Pancreas (tissue), 10 donors: ENCODE measurements at regions of chr5 and their contacts with region 1.

Region 1: DNA sequence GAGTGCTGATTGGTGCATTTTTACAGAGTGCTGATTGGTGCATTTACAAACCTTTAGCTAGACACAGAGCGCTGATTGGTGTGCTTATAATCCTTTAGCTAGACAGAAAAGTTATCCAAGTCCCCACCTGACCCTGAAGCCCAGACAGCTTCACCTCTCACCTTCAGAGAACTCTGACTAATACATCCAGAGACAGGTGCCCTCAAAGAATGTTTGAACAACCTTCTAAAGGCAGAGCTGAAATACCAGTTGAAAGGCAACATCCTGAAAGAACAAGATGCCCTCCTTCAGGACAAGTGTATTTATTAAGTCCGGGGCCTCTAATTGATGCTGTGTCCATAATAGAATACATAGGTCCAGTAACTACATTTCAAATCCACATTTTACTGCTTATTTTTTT is 680.4 kb downstream of the CDH18 start:
- DNase-seq: no peak
- ATAC-seq: no peak
- H3K4me3 ChIP-seq: no peak overlapping the region
- H3K27ac ChIP-seq: no peak overlapping the region
- H3K4me1 ChIP-seq: no peaks in the 10 kb centered on the region
- H3K27me3 ChIP-seq: no peaks in the 10 kb centered on the region
- CTCF ChIP-seq: no peak

Region 2: GRCh38 chr5:18745646-18746615 is 561.6 kb before region 1 on chr5:
- intact Hi-C with region 1: no loop called
- DNase-seq: peak in 1 of 6 donors; percentile 20
- ATAC-seq: peak in 3 of 4 donors; percentile 46 to 80 (median 76)
- H3K4me3 ChIP-seq: peak overlapping the region in 2 of 4 donors; percentile 21 to 39
- H3K27ac ChIP-seq: peak overlapping the region in 2 of 4 donors; percentile 17 to 35
- H3K4me1 ChIP-seq: no peaks in the 10 kb centered on the region
- H3K27me3 ChIP-seq: no peaks in the 10 kb centered on the region
- CTCF ChIP-seq: no peak

Region 3: GRCh38 chr5:18999478-18999877 is 308.1 kb before region 1 on chr5:
- intact Hi-C with region 1: loop called in 1 of 3 experiments (anchors 5 kb)
- DNase-seq: no peak
- ATAC-seq: no peak
- H3K4me3 ChIP-seq: no peak overlapping the region
- H3K27ac ChIP-seq: no peak overlapping the region
- H3K4me1 ChIP-seq: no peaks in the 10 kb centered on the region
- H3K27me3 ChIP-seq: no peaks in the 10 kb centered on the region
- CTCF ChIP-seq: no peak